SK-N-SH (cell line): ENCODE measurements at regions of chr7 and their contacts with region 1.

Region 1: DNA sequence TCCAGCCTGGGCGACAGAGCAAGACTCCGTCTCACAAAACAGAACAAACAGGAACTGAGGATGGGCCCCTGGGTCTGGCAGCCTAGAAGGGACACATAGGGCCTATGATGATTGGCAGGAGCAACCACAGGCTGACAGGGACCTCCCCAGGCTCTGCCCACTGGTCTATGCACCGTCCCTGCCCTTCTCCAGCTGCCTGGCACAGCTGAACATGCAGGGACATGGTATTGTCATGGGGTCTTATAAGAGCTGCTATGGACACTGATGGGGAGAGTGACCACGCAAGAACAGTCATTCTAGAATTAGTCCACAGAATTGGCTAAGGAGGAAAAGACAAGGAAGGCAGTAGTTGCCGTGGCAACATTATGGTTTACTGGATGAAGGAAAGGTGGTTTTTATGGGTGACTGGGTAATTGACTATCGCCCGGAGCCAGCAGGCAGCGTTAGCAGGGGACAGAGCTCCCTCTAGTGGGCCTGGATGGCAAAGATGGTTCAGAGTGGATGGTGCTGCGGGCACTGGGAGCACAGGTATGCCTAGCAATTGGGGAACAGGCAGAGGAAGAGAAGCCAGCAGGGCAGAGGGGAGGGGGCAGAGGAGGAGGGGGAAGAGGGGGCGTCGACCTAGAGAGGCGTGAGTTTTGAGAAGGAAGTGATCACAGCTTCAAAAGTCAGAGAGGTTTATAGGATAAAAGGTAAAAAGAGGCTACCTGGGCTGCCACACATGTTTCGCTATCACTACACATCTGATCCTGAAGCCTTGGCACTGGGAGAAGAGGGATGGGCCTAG is 7.8 kb upstream of the TRIM56 start:
- DNase-seq: peak; percentile 88
- H3K4me3 ChIP-seq: no peak overlapping the region
- H3K27ac ChIP-seq: no peak overlapping the region
- H3K4me1 ChIP-seq: no peaks in the 10 kb centered on the region
- H3K27me3 ChIP-seq: peaks cover 14% of the 10 kb centered on the region; the same call in 1 of the 2 replicates
- CTCF ChIP-seq: peak; percentile 99
- EP300 ChIP-seq: no peak
- RAD21 ChIP-seq: peak; percentile 88

Region 2: DNA sequence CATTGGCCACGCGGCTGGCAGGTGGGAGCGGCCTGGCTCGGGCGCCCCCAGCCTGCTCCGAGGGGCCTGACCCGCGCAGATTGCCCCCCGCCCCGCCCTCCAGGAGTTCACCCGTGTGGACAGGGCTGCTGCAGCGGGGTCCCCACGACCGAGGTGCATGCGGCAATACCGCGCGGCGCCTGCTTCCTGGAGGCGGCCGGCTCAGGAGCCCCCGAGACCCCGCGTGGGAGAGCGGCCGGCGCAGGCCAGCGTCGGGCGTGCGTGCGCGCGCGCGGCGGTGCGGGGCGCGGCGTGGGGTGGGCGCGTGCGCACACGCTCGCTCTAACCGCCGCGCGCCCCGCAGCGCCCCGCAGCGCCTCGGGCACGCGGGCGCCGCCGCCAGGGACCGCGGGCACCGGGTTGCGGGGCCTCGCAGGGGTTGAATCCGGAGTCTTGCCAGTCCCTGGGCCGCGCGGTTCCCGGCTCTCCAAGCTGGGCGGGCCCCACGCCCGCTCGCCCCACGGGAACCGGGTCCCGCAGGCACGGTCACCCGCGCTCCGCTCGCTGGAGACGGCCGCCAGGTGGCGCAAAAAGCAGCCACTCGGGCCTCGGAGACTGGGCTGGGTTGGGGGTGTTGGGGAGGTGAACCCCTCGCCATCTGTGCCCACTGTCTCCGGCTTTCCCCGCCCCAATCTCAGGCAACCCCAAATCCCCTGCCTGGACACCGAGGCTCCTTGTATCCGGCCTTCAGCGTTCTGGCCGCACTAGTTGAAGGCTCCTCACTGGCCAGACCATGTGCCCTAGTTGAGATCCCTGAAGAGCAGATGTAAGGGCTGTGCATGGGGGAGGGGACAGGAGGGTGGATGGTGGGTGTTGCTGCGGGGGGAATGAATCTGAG is 180.5 kb before region 1 on chr7:
- CTCF ChIA-PET with region 1: interaction called, 46 read pairs
- POLR2A ChIA-PET with region 1: no interaction called
- DNase-seq: peak; percentile 87
- H3K4me3 ChIP-seq: peak overlapping the region; percentile 39 to 61; a peak in 3 of 4 replicates
- H3K27ac ChIP-seq: no peak overlapping the region
- H3K4me1 ChIP-seq: peaks cover 7 to 9% of the 10 kb centered on the region in 2 experiments; a peak in 2 of 4 replicates
- H3K27me3 ChIP-seq: peaks cover 54% of the 10 kb centered on the region
- CTCF ChIP-seq: peak; percentile 95
- EP300 ChIP-seq: no peak
- RAD21 ChIP-seq: peak; percentile 60

Region 3: DNA sequence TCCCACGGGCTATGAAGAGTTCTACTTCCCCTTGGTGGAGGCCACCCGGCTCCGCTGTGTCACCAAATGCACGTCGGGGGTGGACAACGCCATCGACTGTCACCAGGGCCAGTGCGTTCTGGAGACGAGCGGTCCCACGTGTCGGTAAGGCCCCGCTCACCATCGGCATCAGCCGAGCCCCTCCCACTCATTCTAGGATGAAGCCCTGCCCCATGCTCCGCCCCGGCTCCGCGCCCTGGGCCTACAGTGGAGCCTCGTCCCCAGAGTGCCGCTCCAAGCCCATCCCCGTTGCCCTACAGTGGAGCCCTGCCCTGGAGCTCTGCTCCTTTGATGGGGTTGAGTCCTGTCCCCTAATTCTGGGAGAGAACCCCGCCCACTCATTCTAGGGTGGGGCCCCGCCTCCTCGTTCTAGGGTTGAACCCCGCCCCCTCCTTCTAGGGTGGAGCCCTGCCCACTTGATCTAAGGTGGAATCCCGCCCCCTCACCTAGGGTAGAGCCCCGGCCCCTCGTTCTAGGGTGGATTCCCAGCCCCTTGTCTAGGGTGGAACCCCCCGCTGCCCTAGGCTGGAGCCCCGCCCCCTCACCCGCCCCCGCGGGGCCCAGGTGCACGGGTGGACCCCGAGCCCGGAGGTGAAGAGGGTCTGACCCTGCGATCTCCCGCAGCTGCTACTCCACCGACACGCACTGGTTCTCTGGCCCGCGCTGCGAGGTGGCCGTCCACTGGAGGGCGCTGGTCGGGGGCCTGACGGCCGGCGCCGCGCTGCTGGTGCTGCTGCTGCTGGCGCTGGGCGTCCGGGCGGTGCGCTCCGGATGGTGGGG is 111.6 kb before region 1 on chr7:
- CTCF ChIA-PET with region 1: interaction called, 12 read pairs
- POLR2A ChIA-PET with region 1: no interaction called
- DNase-seq: peak; percentile 99
- H3K4me3 ChIP-seq: peak overlapping the region; percentile 23 to 54; a peak in 3 of 4 replicates
- H3K27ac ChIP-seq: no peak overlapping the region
- H3K4me1 ChIP-seq: peaks cover 0 to 7% of the 10 kb centered on the region in 2 experiments; a peak in 1 of 4 replicates
- H3K27me3 ChIP-seq: peaks cover 96% of the 10 kb centered on the region
- CTCF ChIP-seq: peak; percentile 89
- EP300 ChIP-seq: no peak
- RAD21 ChIP-seq: peak; percentile 65

Region 4: GRCh38 chr7:101066141-101066832 is 11.2 kb before region 1 on chr7:
- CTCF ChIA-PET with region 1: interaction called, 25 read pairs
- POLR2A ChIA-PET with region 1: no interaction called
- DNase-seq: no peak
- H3K4me3 ChIP-seq: no peak overlapping the region
- H3K27ac ChIP-seq: no peak overlapping the region
- H3K4me1 ChIP-seq: no peaks in the 10 kb centered on the region
- H3K27me3 ChIP-seq: peaks cover 66% of the 10 kb centered on the region
- CTCF ChIP-seq: no peak
- EP300 ChIP-seq: no peak
- RAD21 ChIP-seq: no peak

Region 5: DNA sequence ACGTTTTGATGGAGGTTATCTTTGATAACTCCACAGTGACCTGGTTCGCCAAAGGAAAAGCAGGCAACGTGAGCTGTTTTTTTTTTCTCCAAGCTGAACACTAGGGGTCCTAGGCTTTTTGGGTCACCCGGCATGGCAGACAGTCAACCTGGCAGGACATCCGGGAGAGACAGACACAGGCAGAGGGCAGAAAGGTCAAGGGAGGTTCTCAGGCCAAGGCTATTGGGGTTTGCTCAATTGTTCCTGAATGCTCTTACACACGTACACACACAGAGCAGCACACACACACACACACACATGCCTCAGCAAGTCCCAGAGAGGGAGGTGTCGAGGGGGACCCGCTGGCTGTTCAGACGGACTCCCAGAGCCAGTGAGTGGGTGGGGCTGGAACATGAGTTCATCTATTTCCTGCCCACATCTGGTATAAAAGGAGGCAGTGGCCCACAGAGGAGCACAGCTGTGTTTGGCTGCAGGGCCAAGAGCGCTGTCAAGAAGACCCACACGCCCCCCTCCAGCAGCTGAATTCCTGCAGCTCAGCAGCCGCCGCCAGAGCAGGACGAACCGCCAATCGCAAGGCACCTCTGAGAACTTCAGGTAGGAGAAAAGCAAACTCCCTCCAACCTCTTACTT is 49.3 kb after region 1 on chr7 and contains the start of gene SERPINE1:
- CTCF ChIA-PET with region 1: interaction called, 10 read pairs
- POLR2A ChIA-PET with region 1: no interaction called
- DNase-seq: peak; percentile 83
- H3K4me3 ChIP-seq: peak within 1 kb of the TSS; percentile 46 to 85; a peak in 3 of 4 replicates
- H3K27ac ChIP-seq: peak within 1 kb of the TSS; percentile 61 to 98
- H3K4me1 ChIP-seq: peaks cover 14 to 39% of the 10 kb centered on the region in 2 experiments; a peak in 3 of 4 replicates
- H3K27me3 ChIP-seq: no peaks in the 10 kb centered on the region
- CTCF ChIP-seq: peak; percentile 60
- EP300 ChIP-seq: peak in 1 of 2 experiments; percentile 55; a peak in 1 of 4 replicates
- RAD21 ChIP-seq: no peak; the same call in 1 of the 2 replicates
- polyA plus RNA-seq, gene SERPINE1: 4,174 and 5,753 TPM in 2 replicates